ENCODE measurements at regions of chr5 and their contacts with region 1.

Region 1: GRCh38 chr5:37412515-37413277 is 33.6 kb downstream of the WDR70 start:
- DNase-seq: peak; percentile 89
- H3K4me3 Mint-ChIP-seq: no peak overlapping the region
- H3K27ac Mint-ChIP-seq: no peak overlapping the region
- H3K4me1 Mint-ChIP-seq: no peaks in the 10 kb centered on the region
- H3K27me3 Mint-ChIP-seq: no peaks in the 10 kb centered on the region
- CTCF ChIP-seq: peak; percentile 92

Region 2: DNA sequence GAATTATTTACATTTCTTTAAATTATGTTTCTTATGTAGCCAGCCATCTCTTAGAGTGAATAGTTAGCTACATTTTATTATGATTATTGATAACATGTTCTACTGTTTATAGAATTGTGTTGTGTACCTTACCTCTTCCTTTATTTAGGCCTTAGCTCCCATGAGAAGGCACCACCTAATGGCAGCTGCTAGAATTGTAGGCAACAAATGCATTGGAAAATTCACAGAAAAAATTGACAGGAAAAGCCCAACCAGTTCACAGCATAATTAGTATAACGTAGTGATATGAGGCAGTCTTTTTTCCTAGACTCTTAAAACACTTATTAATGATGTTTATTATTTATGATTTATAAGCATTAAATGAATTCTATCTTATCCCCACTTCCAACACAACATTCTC is 142.2 kb after region 1 on chr5:
- CTCF ChIA-PET with region 1: interaction called, 3 read pairs
- POLR2A ChIA-PET with region 1: no interaction called
- intact Hi-C with region 1: loop called (anchors 1 kb)
- DNase-seq: peak; percentile 55
- H3K4me3 Mint-ChIP-seq: no peak overlapping the region
- H3K27ac Mint-ChIP-seq: no peak overlapping the region
- H3K4me1 Mint-ChIP-seq: peaks cover 6% of the 10 kb centered on the region
- H3K27me3 Mint-ChIP-seq: no peaks in the 10 kb centered on the region
- CTCF ChIP-seq: peak; percentile 40

Region 3: DNA sequence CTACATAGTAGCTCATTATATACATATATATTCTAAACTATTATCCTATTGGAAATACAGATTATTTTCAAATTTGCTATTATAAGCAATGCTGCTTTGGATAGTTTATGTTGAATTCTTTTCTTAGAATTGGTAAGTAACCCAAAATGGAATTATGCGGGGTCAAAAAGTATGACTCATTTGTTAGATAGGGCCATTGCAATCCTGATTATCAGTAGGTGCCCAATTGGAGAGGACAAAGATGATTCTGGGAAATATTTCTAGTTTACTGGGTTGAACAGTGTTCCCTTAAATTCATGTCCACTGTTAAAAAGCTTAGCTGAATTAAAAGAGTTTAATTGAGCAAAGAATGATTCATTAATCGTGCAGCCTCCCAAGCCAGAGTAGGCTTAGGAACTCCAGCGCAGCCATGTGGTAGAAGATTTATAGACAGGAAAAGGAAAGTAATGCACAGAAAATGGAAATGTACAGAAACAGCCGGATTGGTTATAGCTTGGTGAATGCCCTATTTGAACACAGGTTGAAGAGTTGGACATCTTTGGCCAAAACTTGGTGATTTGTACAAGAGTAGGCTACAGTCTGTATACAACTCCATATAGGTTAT is 345.4 kb after region 1 on chr5:
- CTCF ChIA-PET with region 1: interaction called, 3 read pairs
- POLR2A ChIA-PET with region 1: interaction called, 3 read pairs
- intact Hi-C with region 1: loop called (anchors 10 kb)
- DNase-seq: peak; percentile 7
- H3K4me3 Mint-ChIP-seq: no peak overlapping the region
- H3K27ac Mint-ChIP-seq: no peak overlapping the region
- H3K4me1 Mint-ChIP-seq: no peaks in the 10 kb centered on the region
- H3K27me3 Mint-ChIP-seq: no peaks in the 10 kb centered on the region
- CTCF ChIP-seq: no peak